Ascending aorta (tissue), 2 donors: ENCODE measurements at regions of chr12 and their contacts with region 1.

Region 1: DNA sequence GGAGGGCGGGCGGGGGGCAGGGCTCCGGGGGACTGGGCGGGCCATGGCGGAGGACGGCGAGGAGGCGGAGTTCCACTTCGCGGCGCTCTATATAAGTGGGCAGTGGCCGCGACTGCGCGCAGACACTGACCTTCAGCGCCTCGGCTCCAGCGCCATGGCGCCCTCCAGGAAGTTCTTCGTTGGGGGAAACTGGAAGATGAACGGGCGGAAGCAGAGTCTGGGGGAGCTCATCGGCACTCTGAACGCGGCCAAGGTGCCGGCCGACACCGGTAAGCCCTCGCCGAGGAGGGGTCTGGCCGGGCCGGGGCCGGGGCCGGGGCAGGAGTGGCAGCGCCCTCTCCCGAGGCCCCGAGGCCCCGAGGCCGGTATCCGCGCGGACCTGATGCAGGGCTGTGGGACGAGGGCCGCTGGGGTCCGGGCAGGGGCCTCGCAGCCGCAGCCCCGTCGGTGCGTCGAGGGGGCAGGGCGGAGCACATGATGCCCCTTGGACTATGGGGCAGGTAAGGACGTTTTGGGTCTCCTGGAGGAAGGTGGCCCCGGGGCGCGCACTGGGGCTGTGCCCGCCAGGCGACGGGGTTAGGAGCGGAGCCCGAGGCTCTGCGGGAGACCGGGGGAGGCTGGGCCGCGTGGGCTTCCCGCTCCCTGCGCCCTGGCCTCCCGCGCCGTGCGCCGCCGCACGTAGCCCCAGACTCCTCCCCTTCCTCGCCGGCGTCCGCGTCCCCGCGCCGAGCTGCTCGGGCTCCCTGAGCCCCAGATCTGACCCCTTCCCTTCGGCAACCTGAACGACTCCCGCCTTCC is at the start of gene TPI1:
- DNase-seq: no peak
- H3K4me3 ChIP-seq: peak within 1 kb of the TSS; percentile 91 to 94
- H3K27ac ChIP-seq: peak within 1 kb of the TSS; percentile 99
- H3K4me1 ChIP-seq: peaks cover 14 to 40% of the 10 kb centered on the region in 2 donors
- H3K27me3 ChIP-seq: no peaks in the 10 kb centered on the region
- CTCF ChIP-seq: peak in 2 of 3 experiments; percentile 3 to 11
- total RNA-seq, gene TPI1: 482 TPM

Region 2: GRCh38 chr12:6965026-6965661 is 97.5 kb after region 1 on chr12:
- intact Hi-C with region 1: loop called (anchors 1 kb)
- DNase-seq: peak in 1 of 2 donors; percentile 90
- H3K4me3 ChIP-seq: no peak overlapping the region
- H3K27ac ChIP-seq: peak overlapping the region; percentile 64 to 75
- H3K4me1 ChIP-seq: peaks cover 0 to 28% of the 10 kb centered on the region in 2 donors
- H3K27me3 ChIP-seq: no peaks in the 10 kb centered on the region
- CTCF ChIP-seq: peak; percentile 82 to 88 (median 84)